Dorsolateral prefrontal cortex (tissue), 120 donors: ENCODE measurements at regions of chr1 and their contacts with region 1.

Region 1: GRCh38 chr1:32612189-32612881 is 38.0 kb downstream of the ZBTB8OS start:
- DNase-seq: peak; percentile 80 to 95 (median 92)
- H3K4me3 ChIP-seq: peak overlapping the region; percentile 44 to 88 (median 69)
- H3K27ac ChIP-seq: peak overlapping the region in 47 of 59 donors; percentile 0 to 83 (median 64)
- H3K27me3 ChIP-seq: no peaks in the 10 kb centered on the region
- CTCF ChIP-seq: peak in 55 of 56 donors; percentile 6 to 72 (median 55)

Region 2: DNA sequence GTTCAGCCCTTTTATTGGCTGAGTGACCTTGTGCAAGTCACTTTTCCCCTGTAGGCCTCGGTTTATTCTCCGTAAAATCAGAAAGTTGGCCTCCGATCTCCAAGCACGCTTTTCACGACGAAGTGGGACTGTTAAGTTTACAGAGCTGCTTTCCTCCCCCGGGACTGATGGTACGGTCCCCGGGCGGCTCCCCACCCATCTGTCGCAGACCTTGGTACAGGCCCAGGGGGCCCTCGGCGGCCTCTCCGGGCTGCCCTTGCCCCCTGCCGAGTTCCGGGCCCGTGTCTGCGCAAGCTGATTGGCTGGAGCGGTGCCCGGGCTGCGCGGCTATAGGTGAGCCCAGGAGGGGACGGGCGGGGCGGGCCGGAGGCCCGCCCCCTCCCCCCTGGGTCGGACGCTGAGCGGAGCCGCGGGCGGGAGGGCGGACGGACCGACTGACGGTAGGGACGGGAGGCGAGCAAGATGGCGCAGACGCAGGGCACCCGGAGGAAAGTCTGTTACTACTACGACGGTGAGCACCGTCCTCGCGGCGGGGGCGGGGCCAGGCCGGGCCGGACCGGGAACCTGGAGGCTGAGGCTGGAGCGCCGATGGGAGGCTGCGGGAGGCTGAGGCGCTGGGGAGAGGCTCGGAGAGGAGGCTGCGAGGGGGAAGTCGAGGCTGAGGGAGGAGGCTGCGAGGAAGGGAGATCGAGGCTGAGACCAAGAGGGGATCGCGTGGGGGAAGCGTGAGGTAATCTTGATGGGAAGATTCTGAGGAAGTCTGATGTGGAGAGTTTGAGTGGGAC is 320.4 kb before region 1 on chr1 and contains the start of gene HDAC1:
- intact Hi-C with region 1: no loop called
- DNase-seq: peak; percentile 46 to 90 (median 85)
- H3K4me3 ChIP-seq: peak within 1 kb of the TSS; percentile 45 to 95 (median 80)
- H3K27ac ChIP-seq: peak within 1 kb of the TSS in 56 of 59 donors; percentile 1 to 92 (median 74)
- H3K27me3 ChIP-seq: peaks cover 0 to 5% (median 0%) of the 10 kb centered on the region in 45 donors
- CTCF ChIP-seq: peak in 13 of 56 donors; percentile 2 to 45 (median 12)
- total RNA-seq, gene HDAC1: 16.3 to 56.0 (median 29.8) TPM

Region 3: DNA sequence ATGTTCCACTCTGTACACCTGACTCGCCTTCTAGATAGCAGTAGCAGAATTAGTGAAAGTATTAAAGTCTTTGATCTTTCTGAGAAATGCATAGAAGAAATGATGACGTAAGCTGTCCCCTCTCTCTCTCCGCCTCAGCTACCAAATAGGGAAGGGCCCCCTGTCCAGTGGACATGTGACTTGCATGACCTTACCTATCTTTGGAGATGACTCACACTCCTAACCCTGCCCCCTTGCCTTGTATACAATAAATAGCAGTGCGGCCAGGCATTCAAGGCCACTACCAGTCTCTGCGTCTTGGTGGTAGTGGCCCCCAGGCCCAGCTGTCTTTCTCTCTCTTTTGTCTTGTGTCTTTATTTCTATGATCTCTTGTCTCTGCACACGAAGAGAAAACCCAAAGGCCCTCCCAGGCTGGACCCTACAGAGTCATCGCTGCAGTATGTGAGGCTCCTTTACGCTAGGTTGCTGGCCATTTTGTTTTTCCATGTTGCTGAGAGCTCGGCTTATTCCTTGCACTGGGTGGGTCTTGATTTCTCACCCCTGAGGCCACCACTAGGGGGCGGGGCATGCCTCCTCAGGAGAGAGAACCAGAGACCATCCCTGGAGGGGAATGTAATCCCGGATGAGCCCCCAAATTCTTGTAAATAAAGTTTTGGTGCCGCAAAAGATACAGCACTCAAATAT is 163.4 kb before region 1 on chr1:
- intact Hi-C with region 1: loop called in 1 of 2 experiments (anchors 5 kb)
- DNase-seq: no peak
- H3K4me3 ChIP-seq: no peak overlapping the region
- H3K27ac ChIP-seq: no peak overlapping the region
- H3K27me3 ChIP-seq: no peaks in the 10 kb centered on the region
- CTCF ChIP-seq: peak in 4 of 56 donors; percentile 4 to 17 (median 9)

Region 4: DNA sequence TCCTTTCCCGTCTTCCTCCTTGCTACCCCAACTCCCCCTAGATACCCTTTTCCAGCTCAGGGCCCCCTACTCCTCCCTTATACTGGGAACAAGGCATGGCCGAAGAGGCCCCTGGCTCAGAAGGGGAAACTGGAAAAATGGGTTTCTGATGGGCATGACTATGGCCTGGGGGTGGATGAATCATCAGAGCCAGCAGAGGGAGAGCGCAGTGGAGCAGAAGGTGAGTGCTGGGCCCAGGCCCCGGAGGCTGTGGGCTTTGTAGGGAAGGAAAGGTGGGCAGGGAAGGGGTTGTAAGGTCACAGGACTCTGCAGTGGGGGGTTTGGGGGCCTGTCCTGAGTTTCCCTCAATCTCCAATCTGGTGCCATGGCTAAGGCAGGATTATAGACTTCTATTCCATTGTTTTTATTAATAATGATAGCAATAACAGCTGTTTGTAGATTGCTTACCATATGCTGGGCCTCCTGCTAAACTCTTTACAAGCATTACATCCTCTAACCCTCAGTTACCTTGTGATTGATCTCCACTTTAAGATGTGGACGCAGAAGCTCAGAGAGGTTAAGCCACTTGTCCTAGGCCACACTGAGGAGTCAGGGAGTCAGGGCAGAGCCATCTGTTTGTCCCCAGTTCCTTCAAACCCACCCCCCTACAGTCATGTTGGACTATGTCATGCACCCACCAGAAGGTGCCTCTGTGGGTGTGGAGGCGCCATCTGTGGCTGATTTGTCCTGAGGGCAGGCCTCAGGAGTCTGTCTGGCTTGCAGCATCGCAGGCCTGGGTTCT is 607.7 kb after region 1 on chr1:
- intact Hi-C with region 1: no loop called
- DNase-seq: no peak
- H3K4me3 ChIP-seq: no peak overlapping the region
- H3K27ac ChIP-seq: no peak overlapping the region
- H3K27me3 ChIP-seq: no peaks in the 10 kb centered on the region
- CTCF ChIP-seq: no peak